Panc1 (cell line): ENCODE measurements at regions of chr5 and their contacts with region 1.

Region 1: DNA sequence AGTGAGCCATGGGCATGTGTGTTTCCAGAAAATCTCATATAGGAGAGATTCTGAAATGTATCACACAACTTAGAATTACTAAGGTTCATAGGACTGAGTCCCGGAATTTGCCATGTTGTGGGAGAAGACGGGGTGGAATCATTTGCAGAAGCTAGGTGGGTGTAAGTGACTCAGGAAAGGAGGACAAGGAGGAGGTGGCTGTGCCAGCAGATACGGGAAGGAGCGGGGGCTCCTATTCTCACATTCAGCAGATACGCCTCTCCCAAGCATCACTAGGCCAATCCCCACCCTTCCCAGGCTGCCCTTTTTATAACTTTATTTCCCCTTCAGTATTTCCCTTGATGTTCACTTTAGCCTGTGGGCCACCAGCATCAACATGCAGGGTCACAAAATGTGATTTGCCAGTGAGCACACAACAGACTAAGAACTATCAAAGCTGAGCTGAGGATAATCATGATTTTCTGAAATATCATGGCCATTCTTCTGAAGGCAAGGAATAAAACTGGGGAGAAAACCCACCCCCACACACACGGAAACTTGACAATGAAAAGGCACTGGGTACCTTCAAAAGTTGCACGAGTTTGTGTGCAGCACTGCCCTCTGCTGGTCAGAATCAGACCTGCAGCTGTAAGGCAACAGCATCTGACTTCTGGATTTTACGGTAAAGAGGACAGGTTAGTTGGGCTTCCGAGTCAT is 133.2 kb downstream of the MTX3 start:
- DNase-seq: peak; percentile 67
- ATAC-seq: peak; percentile 72; the same call in 1 of the 2 replicates
- H3K4me3 ChIP-seq: no peak overlapping the region
- H3K27ac ChIP-seq: no peak overlapping the region
- H3K4me1 ChIP-seq: no peaks in the 10 kb centered on the region
- H3K27me3 ChIP-seq: peaks cover 15% of the 10 kb centered on the region
- CTCF ChIP-seq: peak; percentile 95

Region 2: DNA sequence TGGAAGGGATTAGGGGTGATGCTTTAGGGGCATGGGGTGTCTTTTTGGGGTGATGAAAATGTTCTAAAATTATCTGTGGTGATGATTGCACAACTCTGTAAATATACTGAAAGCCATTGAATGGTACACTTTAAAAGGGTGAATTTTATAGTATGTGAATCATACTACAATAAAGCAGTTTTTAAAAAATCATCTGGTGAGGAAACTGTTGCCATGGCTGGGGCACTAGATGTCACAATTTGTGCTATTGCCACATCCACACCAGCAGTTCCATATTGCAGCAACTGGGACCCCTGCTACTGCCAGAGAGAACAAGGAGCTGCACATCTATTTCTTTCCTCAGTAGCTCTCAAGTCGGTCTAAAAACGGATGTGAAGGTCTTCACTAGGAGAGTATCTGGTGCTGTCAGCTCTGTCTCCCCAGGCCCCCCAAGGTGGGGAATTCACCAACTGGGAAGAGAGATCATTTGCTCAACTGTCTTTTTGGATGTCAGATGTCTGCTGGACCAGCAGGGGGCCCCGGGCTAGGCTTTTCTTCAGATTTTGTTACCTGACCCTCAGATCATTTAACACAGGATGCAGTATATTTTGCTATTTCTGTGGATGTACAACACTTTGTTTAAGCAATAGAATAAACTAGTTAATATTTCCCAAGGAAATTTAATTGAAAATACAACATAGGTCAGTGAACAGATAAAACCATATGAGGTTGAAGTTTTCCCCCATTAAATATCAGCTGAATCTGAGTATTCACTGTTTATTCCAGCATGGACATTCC is 155.1 kb before region 1 on chr5:
- CTCF ChIA-PET with region 1: no interaction called
- POLR2A ChIA-PET with region 1: no interaction called
- in situ Hi-C with region 1: no loop called
- intact Hi-C with region 1: loop called (anchors 10 kb)
- DNase-seq: no peak
- ATAC-seq: no peak
- H3K4me3 ChIP-seq: no peak overlapping the region
- H3K27ac ChIP-seq: no peak overlapping the region
- H3K4me1 ChIP-seq: no peaks in the 10 kb centered on the region
- H3K27me3 ChIP-seq: no peaks in the 10 kb centered on the region
- CTCF ChIP-seq: peak; percentile 73

Region 3: DNA sequence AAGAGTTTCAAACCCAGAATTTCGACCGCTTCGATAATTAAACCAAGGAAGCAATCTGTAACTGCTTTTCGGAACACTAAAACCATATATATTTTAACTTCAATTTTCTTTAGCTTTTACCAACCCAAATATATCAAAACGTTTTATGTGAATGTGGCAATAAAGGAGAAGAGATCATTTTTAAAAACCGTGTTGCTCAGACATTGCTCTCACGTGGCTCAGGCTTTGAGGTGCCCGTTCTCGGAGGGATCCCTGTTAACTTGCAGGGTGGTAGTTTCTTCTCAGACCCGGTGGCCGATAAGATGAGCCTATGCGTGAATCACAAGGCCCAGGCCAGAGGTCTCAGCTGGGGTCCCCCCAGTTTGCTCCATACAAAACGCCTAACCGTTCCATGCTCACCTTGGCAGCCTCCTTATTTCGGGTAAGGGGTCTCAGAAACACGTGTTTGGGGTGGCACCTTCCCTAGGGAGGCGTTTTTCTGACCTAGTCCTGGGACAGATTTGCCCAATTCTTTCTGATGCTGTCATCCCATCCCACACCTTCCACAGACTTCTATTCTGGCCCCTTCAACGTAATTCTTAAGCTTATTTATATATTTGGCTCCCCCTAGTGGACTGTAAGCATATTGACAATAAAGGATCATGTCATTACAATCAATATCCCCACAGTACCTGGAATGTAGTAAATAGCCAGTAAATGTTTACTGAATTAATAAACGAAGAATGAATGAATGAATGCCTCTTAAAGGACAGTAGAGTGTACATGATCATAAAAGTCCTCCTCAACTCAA is 225.4 kb after region 1 on chr5:
- CTCF ChIA-PET with region 1: no interaction called
- POLR2A ChIA-PET with region 1: no interaction called
- in situ Hi-C with region 1: no loop called
- intact Hi-C with region 1: loop called (anchors 5 kb)
- DNase-seq: peak; percentile 15
- ATAC-seq: peak; percentile 83
- H3K4me3 ChIP-seq: peak overlapping the region in 1 of 2 experiments; percentile 14; a peak in 2 of 4 replicates
- H3K27ac ChIP-seq: no peak overlapping the region
- H3K4me1 ChIP-seq: no peaks in the 10 kb centered on the region
- H3K27me3 ChIP-seq: peaks cover 2% of the 10 kb centered on the region; the same call in 1 of the 2 replicates
- CTCF ChIP-seq: peak; percentile 76